AG04449 (cell line): ENCODE measurements at regions of chr6 and their contacts with region 1.

Region 1: DNA sequence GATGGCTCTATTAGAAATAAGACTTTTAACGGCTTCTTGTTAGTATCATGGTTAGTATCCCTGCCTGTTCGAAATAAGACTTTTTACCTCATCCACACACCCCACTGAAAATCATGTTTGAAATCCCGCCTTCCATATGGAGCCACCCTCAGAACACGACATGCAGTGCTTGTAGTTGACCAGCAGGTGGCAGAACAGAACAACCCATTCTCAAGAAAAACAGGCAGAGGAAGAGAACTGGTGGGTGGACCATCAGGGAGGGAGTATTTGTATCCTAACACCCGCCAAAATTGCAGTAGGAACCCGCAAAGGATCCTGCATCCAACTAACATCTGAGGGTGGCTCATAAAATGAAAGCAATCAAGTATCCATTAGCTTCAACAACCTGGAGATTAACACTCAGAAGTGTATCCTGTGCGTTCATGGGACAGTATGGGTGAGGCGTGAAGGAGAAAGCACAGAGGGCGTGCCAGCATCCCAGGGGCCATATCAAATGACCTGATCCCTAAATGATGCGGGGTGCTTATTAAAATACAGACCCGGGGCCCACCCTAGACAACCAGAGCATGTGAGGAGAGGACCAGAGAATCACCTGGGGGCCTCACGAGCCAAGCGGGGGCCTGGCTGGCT is 89.6 kb upstream of the NHSL1 start:
- DNase-seq: no peak
- H3K4me3 ChIP-seq: no peak overlapping the region
- CTCF ChIP-seq: peak; percentile 90

Region 2: GRCh38 chr6:138526822-138527235 is 62.1 kb before region 1 on chr6:
- CTCF ChIA-PET with region 1: interaction called, 27 read pairs
- POLR2A ChIA-PET with region 1: no interaction called
- DNase-seq: no peak
- H3K4me3 ChIP-seq: no peak overlapping the region; the same call in 1 of the 2 replicates
- CTCF ChIP-seq: no peak

Region 3: GRCh38 chr6:138572167-138572865 is 16.6 kb before region 1 on chr6:
- CTCF ChIA-PET with region 1: interaction called, 126 read pairs
- POLR2A ChIA-PET with region 1: no interaction called
- DNase-seq: no peak
- H3K4me3 ChIP-seq: peak overlapping the region; percentile 56
- CTCF ChIP-seq: no peak

Region 4: DNA sequence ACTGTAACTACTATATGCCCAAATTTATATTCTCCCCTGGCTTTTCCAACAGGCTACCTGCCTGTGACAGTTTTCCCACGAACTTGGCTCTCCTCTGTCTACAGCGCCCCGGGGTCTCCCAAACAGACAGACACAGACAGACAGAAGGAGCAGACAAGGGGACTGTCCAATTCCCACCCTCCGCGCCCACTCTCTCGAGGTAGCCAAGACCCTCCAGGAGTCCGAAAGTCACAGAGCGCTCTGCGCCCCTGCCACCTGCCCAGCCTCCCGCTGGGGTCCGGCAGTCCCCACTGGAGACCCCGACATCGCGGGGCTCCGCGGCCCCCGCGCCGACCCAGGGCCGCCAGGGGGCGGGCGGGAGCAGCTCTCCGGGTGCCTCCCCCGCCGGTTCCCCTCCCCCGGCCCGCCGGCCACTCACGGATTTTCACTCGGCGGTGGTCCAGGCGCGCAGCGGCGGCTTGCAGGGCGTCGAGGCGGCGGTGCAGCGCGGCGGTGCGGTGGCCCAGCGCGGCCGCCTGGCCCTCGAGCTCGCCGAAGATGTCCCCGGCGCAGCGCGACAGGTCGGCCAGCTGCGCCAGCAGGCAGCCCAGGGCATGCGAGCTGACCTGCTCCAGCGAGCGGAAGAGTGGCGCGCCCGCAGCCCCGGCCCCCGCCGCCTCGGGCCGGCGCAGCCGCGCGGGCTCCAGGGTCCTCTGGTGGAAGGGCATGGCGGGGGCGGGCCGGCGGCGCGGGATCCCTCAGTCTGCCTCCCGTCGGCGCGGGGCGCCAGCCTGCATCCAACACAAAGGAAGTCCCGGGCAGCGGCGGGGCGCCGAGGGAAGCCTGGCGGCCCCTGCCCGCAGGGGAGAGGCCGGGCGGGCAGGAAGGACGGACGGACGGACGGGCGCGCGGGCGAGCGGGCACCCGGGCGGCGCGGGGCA is 103.4 kb after region 1 on chr6:
- CTCF ChIA-PET with region 1: interaction called, 24 read pairs
- POLR2A ChIA-PET with region 1: no interaction called
- DNase-seq: no peak
- H3K4me3 ChIP-seq: peak overlapping the region; percentile 73
- CTCF ChIP-seq: peak; percentile 75